Caco-2 (cell line): ENCODE measurements at regions of chr3 and their contacts with region 1.

Region 1: GRCh38 chr3:57735405-57735804 is 20.7 kb upstream of the SLMAP start:
- DNase-seq: no peak
- H3K4me3 ChIP-seq: no peak overlapping the region
- H3K4me3 Mint-ChIP-seq: no peak overlapping the region
- H3K27ac Mint-ChIP-seq: no peak overlapping the region
- H3K4me1 ChIP-seq: no peaks in the 10 kb centered on the region; the same call in 1 of the 2 replicates
- H3K4me1 Mint-ChIP-seq: peaks cover 6% of the 10 kb centered on the region
- H3K27me3 ChIP-seq: no peaks in the 10 kb centered on the region
- H3K27me3 Mint-ChIP-seq: no peaks in the 10 kb centered on the region
- CTCF ChIP-seq: no peak

Region 2: GRCh38 chr3:57675530-57675929 is 59.9 kb before region 1 on chr3:
- CTCF ChIA-PET with region 1: no interaction called
- POLR2A ChIA-PET with region 1: interaction called, 11 read pairs
- intact Hi-C with region 1: no loop called
- DNase-seq: no peak
- H3K4me3 ChIP-seq: no peak overlapping the region
- H3K4me3 Mint-ChIP-seq: no peak overlapping the region
- H3K27ac Mint-ChIP-seq: no peak overlapping the region
- H3K4me1 ChIP-seq: no peaks in the 10 kb centered on the region
- H3K4me1 Mint-ChIP-seq: no peaks in the 10 kb centered on the region
- H3K27me3 ChIP-seq: no peaks in the 10 kb centered on the region
- H3K27me3 Mint-ChIP-seq: no peaks in the 10 kb centered on the region
- CTCF ChIP-seq: no peak